MCF 10A (cell line): ENCODE measurements at regions of chr11 and their contacts with region 1.

Region 1: GRCh38 chr11:10307442-10308207 is 2.8 kb downstream of the ADM start:
- DNase-seq: peak; percentile 87
- H3K4me3 Mint-ChIP-seq: peak overlapping the region; percentile 79
- H3K27ac Mint-ChIP-seq: peak overlapping the region; percentile 87
- H3K4me1 Mint-ChIP-seq: peaks cover 45% of the 10 kb centered on the region
- H3K27me3 Mint-ChIP-seq: no peaks in the 10 kb centered on the region
- CTCF ChIP-seq: peak; percentile 99

Region 2: GRCh38 chr11:9460322-9461067 is 847.1 kb before region 1 on chr11 and contains the start of gene ZNF143:
- CTCF ChIA-PET with region 1: no interaction called
- POLR2A ChIA-PET with region 1: interaction called, 15 read pairs
- intact Hi-C with region 1: loop called (anchors 5 kb)
- DNase-seq: peak; percentile 100
- H3K4me3 Mint-ChIP-seq: peak within 1 kb of the TSS; percentile 88
- H3K27ac Mint-ChIP-seq: peak within 1 kb of the TSS; percentile 98
- H3K4me1 Mint-ChIP-seq: peaks cover 10% of the 10 kb centered on the region
- H3K27me3 Mint-ChIP-seq: no peaks in the 10 kb centered on the region
- CTCF ChIP-seq: no peak
- total RNA-seq, gene ZNF143: 19.0 and 25.2 TPM in 2 replicates

Region 3: DNA sequence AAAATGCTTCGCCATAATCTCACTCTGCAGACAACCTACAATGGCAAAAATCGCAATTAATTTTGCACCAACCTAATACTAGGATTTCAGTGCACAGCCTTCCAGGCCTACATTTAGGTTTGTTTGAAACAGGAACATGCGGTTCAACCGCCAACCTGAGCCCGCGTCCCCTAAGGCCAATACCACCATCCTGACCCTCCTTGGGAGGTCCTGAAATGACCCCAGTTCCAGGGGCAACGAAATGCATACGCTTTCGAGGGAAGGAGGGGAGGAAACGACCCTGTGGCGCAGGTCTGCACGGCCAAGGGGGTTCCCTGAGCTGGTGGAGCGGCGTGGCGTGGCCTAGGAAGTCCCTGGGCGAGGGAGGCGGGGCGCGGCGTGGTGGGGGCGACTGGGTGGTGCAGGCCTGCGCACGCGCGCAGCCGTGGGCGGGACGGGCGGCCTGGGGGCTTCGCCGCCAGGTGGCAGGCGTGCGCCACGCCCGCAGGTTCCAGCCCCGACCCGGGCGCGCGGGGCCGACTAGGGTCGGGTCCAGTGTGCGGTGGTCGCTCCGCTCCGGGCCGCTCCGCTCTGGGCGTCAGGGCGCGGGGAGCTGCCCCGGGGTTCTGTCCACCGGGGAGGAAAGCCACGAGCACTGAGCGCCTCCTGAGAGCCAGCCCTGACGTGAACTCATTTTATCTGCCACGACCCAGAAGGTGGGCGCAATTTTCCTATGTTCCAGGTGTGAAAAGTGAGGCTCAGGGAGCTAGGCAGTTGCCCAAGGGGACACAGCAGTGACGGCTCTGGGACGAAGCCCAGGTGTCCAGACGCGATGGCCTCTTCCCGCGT is 549.6 kb before region 1 on chr11:
- CTCF ChIA-PET with region 1: interaction called, 27 read pairs
- POLR2A ChIA-PET with region 1: interaction called, 81 read pairs
- intact Hi-C with region 1: loop called (anchors 1 kb)
- DNase-seq: peak; percentile 64
- H3K4me3 Mint-ChIP-seq: peak overlapping the region; percentile 70
- H3K27ac Mint-ChIP-seq: peak overlapping the region; percentile 68
- H3K4me1 Mint-ChIP-seq: peaks cover 69% of the 10 kb centered on the region
- H3K27me3 Mint-ChIP-seq: no peaks in the 10 kb centered on the region
- CTCF ChIP-seq: peak; percentile 87

Region 4: GRCh38 chr11:9923280-9923679 is 384.3 kb before region 1 on chr11:
- CTCF ChIA-PET with region 1: no interaction called
- POLR2A ChIA-PET with region 1: no interaction called
- intact Hi-C with region 1: no loop called
- DNase-seq: no peak
- H3K4me3 Mint-ChIP-seq: no peak overlapping the region
- H3K27ac Mint-ChIP-seq: no peak overlapping the region
- H3K4me1 Mint-ChIP-seq: no peaks in the 10 kb centered on the region
- H3K27me3 Mint-ChIP-seq: no peaks in the 10 kb centered on the region
- CTCF ChIP-seq: no peak

Region 5: GRCh38 chr11:9972989-9973388 is 334.6 kb before region 1 on chr11:
- CTCF ChIA-PET with region 1: interaction called, 7 read pairs
- POLR2A ChIA-PET with region 1: interaction called, 6 read pairs
- intact Hi-C with region 1: loop called (anchors 2 kb)
- DNase-seq: peak; percentile 60
- H3K4me3 Mint-ChIP-seq: no peak overlapping the region
- H3K27ac Mint-ChIP-seq: peak overlapping the region; percentile 8
- H3K4me1 Mint-ChIP-seq: peaks cover 6% of the 10 kb centered on the region
- H3K27me3 Mint-ChIP-seq: no peaks in the 10 kb centered on the region
- CTCF ChIP-seq: peak; percentile 76

Region 6: DNA sequence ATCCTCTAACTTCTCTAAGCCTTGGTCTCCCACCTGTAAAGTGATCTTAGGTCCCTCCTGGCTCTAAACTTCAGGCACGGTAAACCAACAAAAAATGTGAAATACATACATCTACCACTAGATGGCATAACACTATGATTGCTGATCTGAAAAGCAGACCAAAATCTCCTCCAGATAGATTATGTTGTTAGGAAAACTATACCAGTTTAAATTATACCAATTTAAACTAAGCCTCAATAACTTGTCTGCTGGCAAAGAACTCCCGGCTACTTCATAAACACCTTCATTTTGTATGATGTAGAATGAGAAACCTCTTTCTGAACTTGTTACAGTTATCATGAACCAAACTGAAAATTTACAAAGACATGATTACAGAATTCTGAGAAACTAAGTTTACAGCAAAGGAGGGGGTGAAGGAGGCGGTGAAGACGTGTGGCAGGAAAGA is 99.5 kb before region 1 on chr11:
- CTCF ChIA-PET with region 1: interaction called, 56 read pairs
- POLR2A ChIA-PET with region 1: interaction called, 141 read pairs
- intact Hi-C with region 1: loop called (anchors 1 kb)
- DNase-seq: peak; percentile 58
- H3K4me3 Mint-ChIP-seq: no peak overlapping the region
- H3K27ac Mint-ChIP-seq: no peak overlapping the region
- H3K4me1 Mint-ChIP-seq: no peaks in the 10 kb centered on the region
- H3K27me3 Mint-ChIP-seq: no peaks in the 10 kb centered on the region
- CTCF ChIP-seq: peak; percentile 50

Region 7: GRCh38 chr11:10285148-10285802 is 22.4 kb before region 1 on chr11:
- CTCF ChIA-PET with region 1: interaction called, 6 read pairs
- POLR2A ChIA-PET with region 1: interaction called, 57 read pairs
- intact Hi-C with region 1: no loop called
- DNase-seq: no peak
- H3K4me3 Mint-ChIP-seq: no peak overlapping the region
- H3K27ac Mint-ChIP-seq: peak overlapping the region; percentile 39
- H3K4me1 Mint-ChIP-seq: peaks cover 19% of the 10 kb centered on the region
- H3K27me3 Mint-ChIP-seq: no peaks in the 10 kb centered on the region
- CTCF ChIP-seq: no peak

Region 8: DNA sequence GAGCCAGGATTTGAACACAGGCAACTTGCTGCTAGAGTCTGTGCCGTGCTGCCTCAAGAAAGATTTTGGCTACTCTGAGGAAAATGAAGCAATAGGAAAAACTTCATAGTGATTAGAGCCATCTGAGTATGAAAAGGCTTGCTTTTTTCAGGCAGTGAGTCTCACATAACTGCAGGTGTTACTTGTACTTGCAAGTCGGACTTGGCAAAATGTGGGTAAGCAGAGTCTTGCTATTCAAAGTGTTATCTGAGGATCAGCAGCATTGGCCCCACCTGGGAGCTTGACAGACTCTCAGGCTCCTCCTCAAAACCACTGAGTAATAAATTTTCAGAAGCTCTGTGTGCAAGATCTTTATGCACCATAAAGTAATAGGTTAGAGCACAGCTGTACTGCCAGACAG is 215.3 kb after region 1 on chr11:
- CTCF ChIA-PET with region 1: no interaction called
- POLR2A ChIA-PET with region 1: no interaction called
- intact Hi-C with region 1: no loop called
- DNase-seq: no peak
- H3K4me3 Mint-ChIP-seq: no peak overlapping the region
- H3K27ac Mint-ChIP-seq: no peak overlapping the region
- H3K4me1 Mint-ChIP-seq: peaks cover 30% of the 10 kb centered on the region
- H3K27me3 Mint-ChIP-seq: no peaks in the 10 kb centered on the region
- CTCF ChIP-seq: no peak

Region 9: GRCh38 chr11:10735481-10736475 is 428.2 kb after region 1 on chr11:
- CTCF ChIA-PET with region 1: interaction called, 4 read pairs
- POLR2A ChIA-PET with region 1: interaction called, 3 read pairs
- intact Hi-C with region 1: loop called (anchors 1 kb)
- DNase-seq: peak; percentile 93
- H3K4me3 Mint-ChIP-seq: peak overlapping the region; percentile 66
- H3K27ac Mint-ChIP-seq: peak overlapping the region; percentile 82
- H3K4me1 Mint-ChIP-seq: peaks cover 14% of the 10 kb centered on the region
- H3K27me3 Mint-ChIP-seq: no peaks in the 10 kb centered on the region
- CTCF ChIP-seq: peak; percentile 98